B cell (primary cell): ENCODE measurements at regions of chr5 and their contacts with region 1.

Region 1: GRCh38 chr5:32232441-32233219 is 58.5 kb upstream of the GOLPH3 start:
- DNase-seq: peak; percentile 84
- ATAC-seq: peak; percentile 85
- H3K4me3 ChIP-seq: no peak overlapping the region
- H3K4me3 Mint-ChIP-seq: no peak overlapping the region
- H3K27ac ChIP-seq: peak overlapping the region in 1 of 2 donors; percentile 61
- H3K27ac Mint-ChIP-seq: peak overlapping the region; percentile 73
- H3K4me1 ChIP-seq: peaks cover 0 to 24% of the 10 kb centered on the region in 2 donors
- H3K4me1 Mint-ChIP-seq: peaks cover 21% of the 10 kb centered on the region
- H3K27me3 ChIP-seq: no peaks in the 10 kb centered on the region
- H3K27me3 Mint-ChIP-seq: no peaks in the 10 kb centered on the region
- CTCF ChIP-seq: peak; percentile 78

Region 2: GRCh38 chr5:32174011-32174870 is 58.4 kb before region 1 on chr5 and contains the start of gene GOLPH3:
- CTCF ChIA-PET with region 1: interaction called, 6 read pairs
- POLR2A ChIA-PET with region 1: no interaction called
- intact Hi-C with region 1: loop called (anchors 5 kb)
- DNase-seq: peak; percentile 91
- ATAC-seq: peak; percentile 85
- H3K4me3 ChIP-seq: peak within 1 kb of the TSS; percentile 65 to 92 (median 80)
- H3K4me3 Mint-ChIP-seq: peak within 1 kb of the TSS; percentile 96
- H3K27ac ChIP-seq: peak within 1 kb of the TSS; percentile 95 to 97
- H3K27ac Mint-ChIP-seq: peak within 1 kb of the TSS; percentile 96
- H3K4me1 ChIP-seq: peaks cover 13 to 19% of the 10 kb centered on the region in 2 donors
- H3K4me1 Mint-ChIP-seq: peaks cover 36% of the 10 kb centered on the region
- H3K27me3 ChIP-seq: no peaks in the 10 kb centered on the region
- H3K27me3 Mint-ChIP-seq: no peaks in the 10 kb centered on the region
- CTCF ChIP-seq: no peak
- total RNA-seq, gene GOLPH3: 58.8 and 62.6 TPM in 2 replicates

Region 3: GRCh38 chr5:32259033-32259432 is 26.4 kb after region 1 on chr5:
- CTCF ChIA-PET with region 1: interaction called, 11 read pairs
- POLR2A ChIA-PET with region 1: no interaction called
- intact Hi-C with region 1: no loop called
- DNase-seq: no peak
- ATAC-seq: no peak
- H3K4me3 ChIP-seq: no peak overlapping the region
- H3K4me3 Mint-ChIP-seq: no peak overlapping the region
- H3K27ac ChIP-seq: no peak overlapping the region
- H3K27ac Mint-ChIP-seq: no peak overlapping the region
- H3K4me1 ChIP-seq: peaks cover 6 to 9% of the 10 kb centered on the region in 2 donors
- H3K4me1 Mint-ChIP-seq: peaks cover 13% of the 10 kb centered on the region
- H3K27me3 ChIP-seq: no peaks in the 10 kb centered on the region
- H3K27me3 Mint-ChIP-seq: no peaks in the 10 kb centered on the region
- CTCF ChIP-seq: no peak

Region 4: DNA sequence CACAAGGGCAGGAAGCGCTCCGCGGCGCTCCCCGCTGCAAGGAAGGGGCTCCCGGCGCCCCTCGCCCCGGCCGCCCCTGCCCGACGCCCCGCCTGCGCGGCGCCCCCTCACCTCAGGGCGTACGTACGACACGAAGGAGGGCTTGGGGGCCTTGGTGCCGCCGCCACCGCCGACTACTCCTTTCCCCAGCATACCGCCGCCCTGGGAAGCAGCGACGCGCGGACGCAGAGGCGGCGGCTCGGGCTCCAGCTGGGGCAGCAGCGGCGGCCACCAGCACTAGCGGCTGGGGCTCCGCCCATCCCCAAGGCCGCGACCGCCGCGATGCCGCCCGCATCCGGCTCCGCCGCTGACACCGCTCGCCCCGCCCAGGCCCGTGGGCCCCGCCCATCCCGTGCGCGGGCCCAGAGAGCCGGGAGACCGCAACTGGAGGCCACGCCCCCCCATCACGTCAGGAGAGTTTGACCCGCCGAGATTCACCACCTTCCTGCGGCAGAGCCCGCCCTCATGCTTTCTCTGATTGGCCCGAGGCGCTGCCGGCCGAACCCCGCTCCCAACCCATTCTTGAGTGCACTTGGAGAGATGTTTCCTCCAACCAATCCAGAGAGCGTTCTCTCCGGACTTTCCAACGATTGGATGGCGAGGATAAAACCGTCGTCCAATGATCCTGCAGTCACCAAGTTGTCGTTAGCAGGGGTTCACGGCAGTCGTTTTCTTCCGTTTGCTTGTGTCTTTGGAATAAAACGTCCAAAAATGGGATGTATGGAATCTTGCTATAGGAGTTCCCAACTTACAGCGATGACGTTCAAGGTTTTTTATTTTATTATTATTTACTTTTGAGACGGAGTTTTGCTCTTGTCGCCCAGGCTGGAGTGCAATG is 80.3 kb after region 1 on chr5 and contains the start of gene MTMR12:
- CTCF ChIA-PET with region 1: interaction called, 4 read pairs
- POLR2A ChIA-PET with region 1: interaction called, 3 read pairs
- intact Hi-C with region 1: loop called (anchors 5 kb)
- DNase-seq: peak; percentile 100
- ATAC-seq: peak; percentile 88
- H3K4me3 ChIP-seq: peak within 1 kb of the TSS; percentile 75 to 96 (median 82)
- H3K4me3 Mint-ChIP-seq: peak within 1 kb of the TSS; percentile 88
- H3K27ac ChIP-seq: peak within 1 kb of the TSS; percentile 89 to 92
- H3K27ac Mint-ChIP-seq: peak within 1 kb of the TSS; percentile 95
- H3K4me1 ChIP-seq: peaks cover 31 to 43% of the 10 kb centered on the region in 2 donors
- H3K4me1 Mint-ChIP-seq: peaks cover 38% of the 10 kb centered on the region
- H3K27me3 ChIP-seq: no peaks in the 10 kb centered on the region
- H3K27me3 Mint-ChIP-seq: no peaks in the 10 kb centered on the region
- CTCF ChIP-seq: no peak
- total RNA-seq, gene MTMR12: 29.2 and 29.4 TPM in 2 replicates

Region 5: GRCh38 chr5:32379421-32379820 is 146.8 kb after region 1 on chr5:
- CTCF ChIA-PET with region 1: interaction called, 11 read pairs
- POLR2A ChIA-PET with region 1: no interaction called
- intact Hi-C with region 1: no loop called
- DNase-seq: no peak
- ATAC-seq: no peak
- H3K4me3 ChIP-seq: no peak overlapping the region
- H3K4me3 Mint-ChIP-seq: no peak overlapping the region
- H3K27ac ChIP-seq: no peak overlapping the region
- H3K27ac Mint-ChIP-seq: no peak overlapping the region
- H3K4me1 ChIP-seq: no peaks in the 10 kb centered on the region
- H3K4me1 Mint-ChIP-seq: no peaks in the 10 kb centered on the region
- H3K27me3 ChIP-seq: no peaks in the 10 kb centered on the region
- H3K27me3 Mint-ChIP-seq: no peaks in the 10 kb centered on the region
- CTCF ChIP-seq: no peak